HEK293 (cell line): ENCODE measurements at regions of chr2 and their contacts with region 1.

Region 1: GRCh38 chr2:9555297-9556141 is at the start of gene ADAM17:
- H3K4me3 ChIP-seq: peak within 1 kb of the TSS; percentile 96
- H3K27ac ChIP-seq: peak within 1 kb of the TSS; percentile 99
- H3K4me1 ChIP-seq: peaks cover 11% of the 10 kb centered on the region
- CTCF ChIP-seq: peak; percentile 95

Region 2: DNA sequence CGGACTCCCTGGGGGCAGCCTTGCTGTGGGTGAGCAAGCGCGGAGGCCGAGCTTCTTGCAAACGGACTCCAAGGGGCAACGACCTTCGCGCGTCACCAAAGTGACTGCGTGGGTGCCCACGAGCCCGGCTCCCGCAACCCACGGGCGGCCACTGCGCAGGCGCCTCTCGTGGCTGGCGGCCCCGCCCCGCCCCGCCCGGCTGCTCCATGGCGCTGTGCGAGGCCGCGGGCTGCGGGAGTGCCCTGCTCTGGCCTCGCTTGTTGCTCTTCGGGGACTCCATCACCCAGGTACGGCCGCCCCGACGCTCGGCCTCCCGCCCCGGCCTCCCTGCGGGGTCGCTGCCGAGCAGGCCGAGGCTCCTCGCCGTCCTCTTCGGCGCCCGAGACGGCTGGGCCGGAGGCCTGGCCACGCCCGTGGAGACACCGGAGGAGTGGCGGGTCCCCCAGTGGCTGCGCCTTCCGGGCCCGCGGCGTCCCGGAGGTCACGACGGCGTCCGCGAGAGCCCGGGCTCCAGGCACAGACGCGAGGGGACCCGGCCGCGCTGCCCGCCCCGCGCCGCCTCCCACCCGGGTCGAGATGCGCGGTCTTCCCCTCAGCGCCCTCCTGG is 81.1 kb before region 1 on chr2 and contains the start of gene IAH1:
- CTCF ChIA-PET with region 1: no interaction called
- POLR2A ChIA-PET with region 1: interaction called, 12 read pairs
- H3K4me3 ChIP-seq: peak within 1 kb of the TSS; percentile 59
- H3K27ac ChIP-seq: peak within 1 kb of the TSS; percentile 92
- H3K4me1 ChIP-seq: no peaks in the 10 kb centered on the region; the same call in 1 of the 2 replicates
- CTCF ChIP-seq: no peak

Region 3: GRCh38 chr2:9565436-9566153 is 10.1 kb after region 1 on chr2:
- CTCF ChIA-PET with region 1: interaction called, 3 read pairs
- POLR2A ChIA-PET with region 1: interaction called, 14 read pairs
- H3K4me3 ChIP-seq: no peak overlapping the region
- H3K27ac ChIP-seq: no peak overlapping the region
- H3K4me1 ChIP-seq: no peaks in the 10 kb centered on the region
- CTCF ChIP-seq: no peak